ENCODE measurements at regions of chr5 and their contacts with region 1.

Region 1: DNA sequence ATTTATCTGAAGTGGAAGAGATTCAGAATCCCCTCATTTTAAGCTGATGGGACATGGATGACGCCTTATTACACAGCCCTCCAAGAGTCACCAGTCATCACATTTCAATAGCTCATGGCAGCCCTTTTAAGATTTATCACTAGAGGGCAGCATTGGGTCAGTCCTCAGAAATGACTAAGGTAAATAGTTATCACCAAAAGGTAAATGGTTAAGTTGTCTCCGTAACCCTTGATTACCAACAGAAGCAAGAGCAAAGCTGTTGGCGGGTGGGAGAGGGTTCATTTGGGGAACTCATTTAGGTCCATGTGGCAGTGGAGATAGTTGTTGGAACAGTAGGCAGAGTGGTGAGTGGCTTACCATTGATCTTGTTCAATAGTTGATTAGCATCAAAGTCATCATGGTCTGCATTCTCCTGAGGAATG is 12.0 kb upstream of the C9 start:
- DNase-seq: no peak
- H3K4me3 ChIP-seq: no peak overlapping the region
- CTCF ChIP-seq: peak; percentile 41

Region 2: DNA sequence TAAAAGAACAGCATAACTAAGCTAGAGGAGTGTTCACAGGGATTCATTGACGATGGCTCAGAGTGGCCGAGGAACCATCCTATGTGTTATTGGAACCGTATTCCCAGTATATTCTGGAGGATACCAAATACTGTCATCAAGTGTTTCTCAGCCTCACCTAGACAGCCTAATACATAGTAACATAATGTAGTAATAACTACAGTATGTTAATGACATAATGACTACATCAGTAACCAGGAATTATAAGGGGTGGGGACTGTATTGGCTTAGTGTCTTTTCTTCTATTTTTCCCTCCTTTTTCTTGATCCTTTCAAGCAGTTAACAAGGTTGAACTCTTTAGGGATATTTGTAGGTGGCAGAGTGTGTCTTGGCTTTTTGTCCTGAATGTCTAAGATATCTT is 14.6 kb after region 1 on chr5:
- CTCF ChIA-PET with region 1: interaction called, 29 read pairs
- POLR2A ChIA-PET with region 1: interaction called, 5 read pairs
- DNase-seq: no peak
- H3K4me3 ChIP-seq: no peak overlapping the region
- CTCF ChIP-seq: no peak

Region 3: GRCh38 chr5:39399135-39400036 is 23.1 kb after region 1 on chr5:
- CTCF ChIA-PET with region 1: interaction called, 28 read pairs
- POLR2A ChIA-PET with region 1: interaction called, 5 read pairs
- DNase-seq: peak; percentile 94
- H3K4me3 ChIP-seq: no peak overlapping the region
- CTCF ChIP-seq: no peak

Region 4: DNA sequence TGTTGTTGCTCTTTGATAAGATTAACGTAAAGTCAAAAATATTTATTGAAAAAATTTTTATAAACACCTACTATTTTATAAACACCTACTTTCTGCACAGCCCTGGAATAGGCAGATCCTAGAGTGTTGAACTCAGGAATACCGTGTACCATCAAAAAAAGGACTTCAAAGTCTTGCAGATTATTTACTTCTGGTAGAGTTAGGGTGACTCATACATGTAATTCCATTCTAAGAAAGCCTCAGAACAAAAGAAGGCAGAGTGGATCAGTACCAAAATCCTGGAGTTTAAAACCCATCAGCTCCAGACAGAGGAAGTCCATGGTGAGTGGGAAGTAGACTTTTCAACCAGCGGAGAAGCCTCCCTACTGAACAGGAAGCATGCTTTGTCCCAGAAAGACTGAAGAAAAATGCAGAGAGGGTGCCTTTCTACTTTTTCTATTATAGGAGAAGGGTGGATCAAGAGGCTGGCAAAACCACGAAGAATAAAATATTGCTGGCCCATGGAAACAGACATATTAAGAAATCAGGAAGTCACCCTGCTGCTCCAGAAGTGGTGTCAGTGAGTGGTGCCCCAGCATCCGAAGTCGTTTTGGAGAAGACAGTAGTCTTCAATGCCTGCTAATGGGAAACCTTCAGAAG is 93.6 kb after region 1 on chr5:
- CTCF ChIA-PET with region 1: no interaction called
- POLR2A ChIA-PET with region 1: no interaction called
- DNase-seq: no peak
- H3K4me3 ChIP-seq: no peak overlapping the region
- CTCF ChIP-seq: no peak

Measured in AG04449 (cell line).